Activated B cell treated with CpG ODN at 0.5 μM for 24 hours (primary cell): ENCODE measurements at regions of chr18 and their contacts with region 1.

Region 1: GRCh38 chr18:46917108-46917802 is at the starts of genes KATNAL2 and PIAS2:
- DNase-seq: peak; percentile 85
- ATAC-seq: peak; percentile 93
- H3K4me3 Mint-ChIP-seq: peak within 1 kb of the TSS; percentile 87
- H3K27ac Mint-ChIP-seq: peak within 1 kb of the TSS; percentile 79
- H3K4me1 Mint-ChIP-seq: peaks cover 30% of the 10 kb centered on the region
- H3K27me3 Mint-ChIP-seq: no peaks in the 10 kb centered on the region
- CTCF ChIP-seq: no peak
- total RNA-seq, gene KATNAL2: 1.2 and 2.6 TPM in 2 replicates
- total RNA-seq, gene PIAS2: 34.2 and 36.0 TPM in 2 replicates

Region 2: GRCh38 chr18:46104128-46104911 is 812.9 kb before region 1 on chr18 and contains the start of gene HAUS1:
- CTCF ChIA-PET with region 1: no interaction called
- POLR2A ChIA-PET with region 1: no interaction called
- intact Hi-C with region 1: loop called (anchors 10 kb)
- DNase-seq: peak; percentile 81
- ATAC-seq: peak; percentile 99
- H3K4me3 Mint-ChIP-seq: peak within 1 kb of the TSS; percentile 98
- H3K27ac Mint-ChIP-seq: peak within 1 kb of the TSS; percentile 82
- H3K4me1 Mint-ChIP-seq: peaks cover 19% of the 10 kb centered on the region
- H3K27me3 Mint-ChIP-seq: no peaks in the 10 kb centered on the region
- CTCF ChIP-seq: no peak
- total RNA-seq, gene HAUS1: 34.6 and 39.5 TPM in 2 replicates

Region 3: DNA sequence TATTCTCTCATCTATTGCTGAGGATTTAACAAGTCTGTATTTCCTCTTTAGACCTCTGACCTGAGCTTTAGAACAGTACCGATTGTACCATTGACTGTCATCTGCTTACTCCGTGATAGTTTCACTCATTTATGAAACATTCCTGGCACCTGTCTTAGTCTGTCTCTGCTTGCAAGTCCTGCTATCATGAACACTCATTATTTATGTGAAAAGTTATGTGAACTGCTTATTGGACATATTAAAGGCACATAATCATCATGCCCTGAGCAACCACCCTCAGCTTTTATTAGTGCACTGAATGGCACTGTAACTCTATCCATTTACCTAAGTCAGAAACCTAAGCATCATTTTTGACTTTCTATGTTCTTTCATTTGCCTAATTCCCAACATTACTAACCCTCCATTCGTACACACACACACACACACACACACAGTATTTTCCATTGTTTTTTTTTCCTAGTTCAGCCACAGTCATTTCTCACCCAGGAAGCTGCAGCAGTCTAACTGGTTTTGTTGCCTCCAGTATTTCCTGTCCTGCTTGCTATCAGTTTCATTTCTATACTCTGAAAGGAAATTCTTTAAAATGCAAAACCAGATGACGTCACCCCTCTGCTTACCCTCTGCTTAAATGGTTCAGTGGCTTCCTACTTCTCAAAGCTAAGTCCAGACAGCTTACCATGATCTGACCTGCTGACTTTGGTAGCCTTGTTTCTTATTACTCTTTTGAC is 667.0 kb before region 1 on chr18:
- CTCF ChIA-PET with region 1: no interaction called
- POLR2A ChIA-PET with region 1: interaction called, 3 read pairs
- intact Hi-C with region 1: loop called (anchors 2 kb)
- DNase-seq: no peak
- ATAC-seq: peak; percentile 94
- H3K4me3 Mint-ChIP-seq: peak overlapping the region; percentile 78
- H3K27ac Mint-ChIP-seq: peak overlapping the region; percentile 94
- H3K4me1 Mint-ChIP-seq: peaks cover 46% of the 10 kb centered on the region
- H3K27me3 Mint-ChIP-seq: no peaks in the 10 kb centered on the region
- CTCF ChIP-seq: no peak

Region 4: DNA sequence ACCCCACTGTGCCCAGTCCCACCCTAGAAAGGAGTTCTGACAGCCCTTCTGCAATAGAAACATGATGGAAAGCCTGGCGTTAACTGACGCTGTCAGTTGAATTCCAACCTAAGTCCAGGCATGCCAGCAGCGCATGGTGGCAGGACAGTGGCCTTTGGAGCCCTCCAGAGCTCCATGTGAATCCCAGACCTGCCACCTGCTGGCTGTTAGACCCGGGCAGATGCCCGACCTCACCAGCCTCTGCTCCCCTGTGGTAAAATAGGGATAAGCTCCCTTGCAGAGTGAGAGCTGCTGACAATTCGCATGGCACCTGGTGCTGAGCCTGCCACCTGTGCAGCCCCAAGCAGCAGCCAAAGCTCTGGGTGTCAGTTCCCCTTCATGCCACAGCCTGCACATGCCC is 398.8 kb before region 1 on chr18:
- CTCF ChIA-PET with region 1: no interaction called
- POLR2A ChIA-PET with region 1: no interaction called
- intact Hi-C with region 1: no loop called
- DNase-seq: no peak
- ATAC-seq: no peak
- H3K4me3 Mint-ChIP-seq: no peak overlapping the region
- H3K27ac Mint-ChIP-seq: no peak overlapping the region
- H3K4me1 Mint-ChIP-seq: no peaks in the 10 kb centered on the region
- H3K27me3 Mint-ChIP-seq: peaks cover 2% of the 10 kb centered on the region
- CTCF ChIP-seq: no peak

Region 5: DNA sequence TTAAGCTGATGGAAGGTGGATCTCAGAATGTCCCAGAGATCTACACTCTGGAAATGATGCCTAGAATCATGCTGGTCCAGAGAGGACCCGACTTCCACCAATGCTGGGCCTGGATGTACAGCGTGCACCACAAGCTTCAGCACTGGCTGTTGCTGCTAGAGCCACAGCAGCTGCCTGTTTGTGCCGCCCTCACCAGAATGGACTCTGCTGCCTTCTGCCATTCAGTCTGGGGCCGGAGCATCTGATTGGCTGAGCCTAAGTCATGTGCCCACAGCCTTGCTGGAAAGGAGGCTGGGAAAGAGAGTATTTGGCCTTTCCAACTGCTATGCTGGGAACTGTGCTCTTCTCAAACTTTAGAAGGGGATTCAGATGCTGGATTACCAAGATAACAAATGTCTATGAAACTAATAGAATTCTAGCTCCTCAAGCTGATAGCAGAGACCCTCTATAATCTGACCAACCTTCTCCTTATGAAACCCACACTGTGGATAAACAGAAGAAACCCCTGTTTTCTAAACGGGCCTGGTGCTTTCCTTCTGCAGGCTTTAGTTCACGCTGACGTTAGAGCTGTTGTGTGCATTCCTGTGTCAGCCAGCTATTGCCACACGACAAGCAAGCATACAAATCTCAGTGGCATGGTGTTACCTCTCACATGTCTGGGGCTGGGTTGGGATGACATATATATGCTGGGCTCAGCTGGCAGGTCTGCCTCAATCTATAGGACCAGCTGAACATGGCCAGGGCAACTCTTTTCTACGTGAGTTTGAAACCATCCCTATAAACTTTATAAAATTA is 256.1 kb before region 1 on chr18:
- CTCF ChIA-PET with region 1: no interaction called
- POLR2A ChIA-PET with region 1: no interaction called
- intact Hi-C with region 1: loop called (anchors 2 kb)
- DNase-seq: no peak
- ATAC-seq: no peak
- H3K4me3 Mint-ChIP-seq: no peak overlapping the region
- H3K27ac Mint-ChIP-seq: no peak overlapping the region
- H3K4me1 Mint-ChIP-seq: no peaks in the 10 kb centered on the region
- H3K27me3 Mint-ChIP-seq: peaks cover 3% of the 10 kb centered on the region
- CTCF ChIP-seq: no peak

Region 6: DNA sequence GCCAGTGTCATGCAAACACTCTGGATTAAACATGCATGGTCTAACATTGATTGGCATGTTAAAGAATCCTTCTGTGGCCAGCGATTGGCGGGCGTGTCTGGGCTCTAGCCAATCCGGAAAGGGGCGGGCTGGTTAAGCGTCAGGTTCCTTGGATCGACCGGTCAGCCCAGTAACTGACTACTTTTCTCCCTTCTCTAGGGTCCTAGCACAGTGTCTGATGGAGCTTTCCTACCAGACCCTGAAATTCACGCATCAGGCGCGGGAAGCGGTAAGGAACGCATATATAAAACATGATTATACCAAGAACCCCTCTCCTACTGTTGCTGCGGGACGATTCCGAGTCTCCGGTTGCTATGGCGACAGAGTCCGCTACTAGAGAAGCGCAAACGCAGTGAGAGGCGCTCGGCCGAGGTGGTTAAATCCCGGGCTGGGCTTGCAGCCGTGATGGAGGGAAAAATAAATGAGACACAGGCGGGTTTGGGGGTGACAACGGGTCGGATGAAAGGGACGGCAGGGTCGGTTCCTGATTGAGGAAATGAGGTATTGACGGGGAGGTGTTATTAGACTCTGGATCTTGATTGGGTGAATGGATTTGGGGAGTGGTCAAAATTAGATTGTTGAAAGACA is 29.5 kb after region 1 on chr18:
- CTCF ChIA-PET with region 1: no interaction called
- POLR2A ChIA-PET with region 1: interaction called, 4 read pairs
- intact Hi-C with region 1: loop called (anchors 1 kb)
- DNase-seq: peak; percentile 52
- ATAC-seq: peak; percentile 96
- H3K4me3 Mint-ChIP-seq: no peak overlapping the region
- H3K27ac Mint-ChIP-seq: no peak overlapping the region
- H3K4me1 Mint-ChIP-seq: no peaks in the 10 kb centered on the region
- H3K27me3 Mint-ChIP-seq: peaks cover 3% of the 10 kb centered on the region
- CTCF ChIP-seq: no peak

Region 7: DNA sequence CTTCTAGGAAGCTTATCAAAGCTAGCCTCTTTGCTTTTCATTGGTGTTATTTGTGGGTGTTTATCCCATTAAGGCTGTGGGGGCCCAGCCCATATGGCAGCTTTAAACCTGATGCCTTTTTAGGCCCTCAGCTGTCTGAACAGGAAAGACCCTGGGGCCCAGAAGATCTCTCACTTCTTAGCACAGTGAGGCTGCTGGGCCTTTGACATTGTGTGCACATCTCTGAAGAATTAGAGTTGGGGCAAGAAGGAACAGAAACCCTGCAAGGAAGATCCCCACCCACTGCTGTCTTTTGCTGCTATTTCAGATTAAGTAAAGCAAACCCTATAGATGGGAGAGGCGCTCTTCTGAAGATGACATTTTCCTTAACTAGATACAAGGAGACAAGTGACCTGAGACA is 763.2 kb after region 1 on chr18:
- CTCF ChIA-PET with region 1: no interaction called
- POLR2A ChIA-PET with region 1: no interaction called
- intact Hi-C with region 1: loop called (anchors 10 kb)
- DNase-seq: no peak
- ATAC-seq: peak; percentile 72
- H3K4me3 Mint-ChIP-seq: peak overlapping the region; percentile 48
- H3K27ac Mint-ChIP-seq: peak overlapping the region; percentile 91
- H3K4me1 Mint-ChIP-seq: peaks cover 77% of the 10 kb centered on the region
- H3K27me3 Mint-ChIP-seq: no peaks in the 10 kb centered on the region
- CTCF ChIP-seq: no peak